Thyroid gland (tissue), 4 donors: ENCODE measurements at regions of chr2 and their contacts with region 1.

Region 1: GRCh38 chr2:63861220-63861822 is 19.6 kb downstream of the UGP2 start:
- DNase-seq: peak; percentile 25 to 32
- H3K4me3 ChIP-seq: no peak overlapping the region
- H3K27ac ChIP-seq: peak overlapping the region in 1 of 3 donors; percentile 66
- H3K4me1 ChIP-seq: peaks cover 6 to 21% of the 10 kb centered on the region in 2 donors
- H3K27me3 ChIP-seq: no peaks in the 10 kb centered on the region
- CTCF ChIP-seq: peak in 5 of 6 experiments; percentile 12 to 49 (median 46)
- POLR2A ChIP-seq: no peak

Region 2: GRCh38 chr2:63698825-63699548 is 162.3 kb before region 1 on chr2:
- intact Hi-C with region 1: loop called (anchors 10 kb)
- DNase-seq: peak in 1 of 2 donors; percentile 16
- H3K4me3 ChIP-seq: no peak overlapping the region
- H3K27ac ChIP-seq: no peak overlapping the region
- H3K4me1 ChIP-seq: no peaks in the 10 kb centered on the region
- H3K27me3 ChIP-seq: no peaks in the 10 kb centered on the region
- CTCF ChIP-seq: peak in 3 of 6 experiments; percentile 27 to 29 (median 28)
- POLR2A ChIP-seq: no peak